Natural killer cell (primary cell): ENCODE measurements at regions of chr3 and their contacts with region 1.

Region 1: GRCh38 chr3:40317061-40317855 is 7.8 kb downstream of the EIF1B start:
- DNase-seq: peak in 1 of 2 donors; percentile 84
- ATAC-seq: peak; percentile 77 to 94 (median 92)
- H3K4me3 ChIP-seq: no peak overlapping the region
- H3K4me3 Mint-ChIP-seq: no peak overlapping the region
- H3K27ac ChIP-seq: no peak overlapping the region
- H3K27ac Mint-ChIP-seq: no peak overlapping the region
- H3K4me1 ChIP-seq: no peaks in the 10 kb centered on the region
- H3K4me1 Mint-ChIP-seq: peaks cover 0 to 8% of the 10 kb centered on the region in 2 donors
- H3K27me3 ChIP-seq: no peaks in the 10 kb centered on the region
- H3K27me3 Mint-ChIP-seq: no peaks in the 10 kb centered on the region
- CTCF ChIP-seq: peak; percentile 87

Region 2: DNA sequence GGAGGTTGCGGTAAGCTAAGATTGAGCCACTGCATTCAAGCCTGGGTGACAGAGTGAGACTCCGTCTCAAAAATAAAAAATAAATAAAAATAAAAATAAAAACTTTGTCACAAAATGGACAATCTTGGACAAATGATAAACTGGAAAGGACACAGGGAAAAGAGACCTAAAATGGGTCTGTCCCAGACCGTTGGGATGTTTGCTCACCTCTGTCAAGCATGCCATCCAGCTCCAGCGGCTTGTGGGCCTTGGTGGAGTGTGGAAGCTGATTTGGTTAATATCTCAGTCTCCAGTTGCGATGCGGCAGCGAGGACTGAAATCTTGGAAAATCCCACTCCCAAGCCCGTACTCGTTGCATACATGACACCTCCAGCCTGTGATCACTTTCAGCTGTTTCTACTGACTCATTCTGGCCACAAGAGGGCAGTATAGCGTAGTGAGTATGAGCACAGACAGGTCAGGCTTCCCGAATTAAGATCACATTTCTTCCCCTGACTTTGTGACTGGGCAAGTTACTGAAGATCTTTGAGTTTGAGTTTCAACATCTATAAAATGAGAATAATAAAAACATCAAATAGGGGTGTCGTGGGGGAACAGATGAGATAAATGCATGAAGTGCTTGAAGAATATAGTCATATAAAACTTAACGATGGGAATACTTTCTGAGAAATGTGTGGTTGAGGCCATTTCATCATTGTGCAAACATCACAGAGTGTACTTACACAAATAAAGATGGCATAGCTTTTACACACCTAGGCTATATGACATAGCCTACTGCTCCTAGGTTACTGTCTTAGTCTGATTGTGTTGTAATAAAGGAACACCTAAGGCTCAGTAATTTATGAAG is 869.4 kb before region 1 on chr3:
- intact Hi-C with region 1: loop called (anchors 10 kb)
- DNase-seq: peak; percentile 17 to 88
- ATAC-seq: peak; percentile 82 to 96 (median 83)
- H3K4me3 ChIP-seq: no peak overlapping the region
- H3K4me3 Mint-ChIP-seq: no peak overlapping the region
- H3K27ac ChIP-seq: no peak overlapping the region
- H3K27ac Mint-ChIP-seq: no peak overlapping the region
- H3K4me1 ChIP-seq: peaks cover 3% of the 10 kb centered on the region
- H3K4me1 Mint-ChIP-seq: peaks cover 0 to 4% of the 10 kb centered on the region in 2 donors
- H3K27me3 ChIP-seq: no peaks in the 10 kb centered on the region
- H3K27me3 Mint-ChIP-seq: peaks cover 3 to 19% of the 10 kb centered on the region in 2 donors
- CTCF ChIP-seq: peak; percentile 91

Region 3: DNA sequence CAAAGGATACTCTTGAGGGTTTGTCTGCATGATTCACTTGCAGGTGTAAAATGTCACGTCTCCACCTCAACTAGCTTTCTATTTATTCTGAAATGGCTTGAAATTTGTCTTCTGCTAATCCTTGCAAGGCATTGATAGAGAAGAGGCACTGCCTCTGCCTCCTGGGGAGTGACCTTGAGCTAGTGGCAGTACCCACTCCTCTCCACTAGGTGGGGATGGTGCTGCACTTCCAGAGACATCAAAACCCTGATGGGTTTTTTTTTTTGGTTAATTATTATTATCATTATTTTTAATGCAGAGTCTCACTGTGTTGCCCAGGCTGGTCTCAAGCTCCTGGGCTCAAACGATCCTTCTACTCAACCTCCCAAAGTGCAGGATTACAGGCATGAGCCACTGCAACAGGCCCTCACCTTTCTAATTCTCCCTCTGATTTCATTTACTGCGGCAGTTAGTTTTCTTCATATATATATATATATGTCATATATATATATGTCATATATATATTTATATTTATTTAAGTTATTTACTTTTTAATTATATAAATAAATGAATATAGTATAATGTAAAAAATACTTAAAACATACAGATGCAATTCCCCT is 125.3 kb before region 1 on chr3:
- intact Hi-C with region 1: loop called (anchors 1 kb)
- DNase-seq: peak; percentile 48 to 76
- ATAC-seq: peak; percentile 84 to 90 (median 90)
- H3K4me3 ChIP-seq: no peak overlapping the region
- H3K4me3 Mint-ChIP-seq: no peak overlapping the region
- H3K27ac ChIP-seq: no peak overlapping the region
- H3K27ac Mint-ChIP-seq: no peak overlapping the region
- H3K4me1 ChIP-seq: no peaks in the 10 kb centered on the region
- H3K4me1 Mint-ChIP-seq: no peaks in the 10 kb centered on the region
- H3K27me3 ChIP-seq: no peaks in the 10 kb centered on the region
- H3K27me3 Mint-ChIP-seq: no peaks in the 10 kb centered on the region
- CTCF ChIP-seq: peak; percentile 96

Region 4: GRCh38 chr3:40278791-40279190 is 38.5 kb before region 1 on chr3:
- intact Hi-C with region 1: no loop called
- DNase-seq: no peak
- ATAC-seq: no peak
- H3K4me3 ChIP-seq: no peak overlapping the region
- H3K4me3 Mint-ChIP-seq: no peak overlapping the region
- H3K27ac ChIP-seq: no peak overlapping the region
- H3K27ac Mint-ChIP-seq: no peak overlapping the region
- H3K4me1 ChIP-seq: no peaks in the 10 kb centered on the region
- H3K4me1 Mint-ChIP-seq: no peaks in the 10 kb centered on the region
- H3K27me3 ChIP-seq: no peaks in the 10 kb centered on the region
- H3K27me3 Mint-ChIP-seq: peaks cover 0 to 11% of the 10 kb centered on the region in 2 donors
- CTCF ChIP-seq: no peak

Region 5: GRCh38 chr3:40584625-40585189 is 267.4 kb after region 1 on chr3:
- intact Hi-C with region 1: no loop called
- DNase-seq: peak; percentile 72 to 79
- ATAC-seq: peak; percentile 72 to 88 (median 82)
- H3K4me3 ChIP-seq: no peak overlapping the region
- H3K4me3 Mint-ChIP-seq: no peak overlapping the region
- H3K27ac ChIP-seq: no peak overlapping the region
- H3K27ac Mint-ChIP-seq: no peak overlapping the region
- H3K4me1 ChIP-seq: no peaks in the 10 kb centered on the region
- H3K4me1 Mint-ChIP-seq: peaks cover 0 to 13% of the 10 kb centered on the region in 2 donors
- H3K27me3 ChIP-seq: no peaks in the 10 kb centered on the region
- H3K27me3 Mint-ChIP-seq: peaks cover 13 to 15% of the 10 kb centered on the region in 2 donors
- CTCF ChIP-seq: peak; percentile 89